ENCODE measurements at regions of chr6 and their contacts with region 1.

Region 1: GRCh38 chr6:43386492-43386891 is 17.0 kb upstream of the ZNF318 start:
- DNase-seq: no peak
- ATAC-seq: no peak
- H3K4me3 Mint-ChIP-seq: peak overlapping the region; percentile 15
- H3K27ac Mint-ChIP-seq: peak overlapping the region; percentile 98
- H3K4me1 Mint-ChIP-seq: peaks cover 65% of the 10 kb centered on the region
- H3K27me3 Mint-ChIP-seq: peaks cover 18% of the 10 kb centered on the region
- CTCF ChIP-seq: no peak

Region 2: GRCh38 chr6:43174263-43175112 is 212.0 kb before region 1 on chr6:
- CTCF ChIA-PET with region 1: no interaction called
- POLR2A ChIA-PET with region 1: interaction called, 4 read pairs
- intact Hi-C with region 1: loop called (anchors 5 kb)
- DNase-seq: peak; percentile 77
- ATAC-seq: peak; percentile 71
- H3K4me3 Mint-ChIP-seq: peak overlapping the region; percentile 73
- H3K27ac Mint-ChIP-seq: peak overlapping the region; percentile 90
- H3K4me1 Mint-ChIP-seq: peaks cover 48% of the 10 kb centered on the region
- H3K27me3 Mint-ChIP-seq: no peaks in the 10 kb centered on the region
- CTCF ChIP-seq: no peak

Region 3: DNA sequence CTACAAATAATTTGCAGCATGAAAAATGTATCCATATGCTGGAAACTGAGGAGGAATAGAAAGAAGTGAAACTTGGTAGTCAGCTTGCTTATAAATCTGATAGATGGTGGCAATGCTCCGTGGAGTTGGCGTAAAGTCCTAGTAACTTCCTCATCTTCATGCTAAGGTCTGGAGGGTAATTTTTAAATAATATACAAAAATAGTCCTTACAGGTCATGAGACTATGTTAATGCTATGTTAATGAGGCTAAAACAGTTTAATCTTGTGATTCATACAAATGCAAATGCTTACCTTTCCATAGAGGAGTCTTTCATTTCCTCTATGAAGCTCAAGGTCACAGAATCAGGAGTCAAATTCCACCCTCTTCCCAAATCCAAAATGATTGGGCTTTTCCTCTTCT is 68.5 kb before region 1 on chr6:
- CTCF ChIA-PET with region 1: interaction called, 5 read pairs
- POLR2A ChIA-PET with region 1: interaction called, 11 read pairs
- intact Hi-C with region 1: loop called (anchors 2 kb)
- DNase-seq: no peak
- ATAC-seq: peak; percentile 61
- H3K4me3 Mint-ChIP-seq: peak overlapping the region; percentile 68
- H3K27ac Mint-ChIP-seq: peak overlapping the region; percentile 91
- H3K4me1 Mint-ChIP-seq: peaks cover 86% of the 10 kb centered on the region
- H3K27me3 Mint-ChIP-seq: no peaks in the 10 kb centered on the region
- CTCF ChIP-seq: no peak

Region 4: GRCh38 chr6:43361269-43361668 is 25.2 kb before region 1 on chr6:
- CTCF ChIA-PET with region 1: interaction called, 75 read pairs
- POLR2A ChIA-PET with region 1: interaction called, 384 read pairs
- intact Hi-C with region 1: no loop called
- DNase-seq: no peak
- ATAC-seq: peak; percentile 37
- H3K4me3 Mint-ChIP-seq: no peak overlapping the region
- H3K27ac Mint-ChIP-seq: peak overlapping the region; percentile 7
- H3K4me1 Mint-ChIP-seq: peaks cover 55% of the 10 kb centered on the region
- H3K27me3 Mint-ChIP-seq: no peaks in the 10 kb centered on the region
- CTCF ChIP-seq: no peak

Region 5: GRCh38 chr6:43402820-43403219 is 16.3 kb after region 1 on chr6:
- CTCF ChIA-PET with region 1: interaction called, 6 read pairs
- POLR2A ChIA-PET with region 1: interaction called, 23 read pairs
- intact Hi-C with region 1: loop called (anchors 1 kb)
- DNase-seq: no peak
- ATAC-seq: no peak
- H3K4me3 Mint-ChIP-seq: no peak overlapping the region
- H3K27ac Mint-ChIP-seq: no peak overlapping the region
- H3K4me1 Mint-ChIP-seq: peaks cover 4% of the 10 kb centered on the region
- H3K27me3 Mint-ChIP-seq: peaks cover 23% of the 10 kb centered on the region
- CTCF ChIP-seq: no peak

Region 6: DNA sequence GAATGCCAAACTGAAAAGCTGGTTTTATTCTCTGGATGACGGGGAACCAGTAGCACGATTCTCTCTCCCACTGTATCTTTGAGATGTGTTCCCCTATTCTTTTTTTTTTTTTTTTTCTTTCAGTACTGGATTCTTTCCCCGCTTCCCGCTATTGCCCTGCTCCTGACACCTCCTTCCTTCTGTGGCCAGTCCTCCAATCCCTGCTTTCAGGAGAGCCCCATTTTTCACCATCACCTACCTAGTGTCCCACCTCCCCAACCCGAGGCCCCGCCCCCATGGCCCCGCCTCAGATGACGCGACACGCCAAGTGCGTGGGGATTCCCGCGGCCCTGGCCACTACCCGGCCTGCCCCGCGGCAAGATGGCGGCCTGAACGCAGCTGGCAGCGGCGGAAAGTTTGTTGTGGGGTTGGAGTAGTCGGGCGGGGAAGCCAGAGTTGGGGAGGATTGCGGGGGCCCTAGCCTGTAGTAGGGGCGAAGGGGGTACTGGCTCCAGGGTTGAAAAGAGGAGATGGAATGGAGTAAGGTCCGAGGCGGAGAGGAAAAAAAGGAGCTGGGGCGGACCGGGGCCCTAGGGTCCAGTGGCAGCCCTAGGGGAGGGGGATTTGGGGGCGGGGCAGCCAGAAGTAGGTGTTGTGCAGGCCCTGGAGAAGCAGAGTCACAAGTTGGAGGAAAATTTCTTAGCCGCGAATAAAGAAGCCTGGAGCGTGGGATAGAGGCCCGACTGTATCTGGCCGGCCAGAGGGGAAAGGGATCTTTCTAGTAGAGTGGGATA is 90.9 kb after region 1 on chr6 and contains the start of gene TJAP1:
- CTCF ChIA-PET with region 1: no interaction called
- POLR2A ChIA-PET with region 1: interaction called, 15 read pairs
- intact Hi-C with region 1: no loop called
- DNase-seq: peak; percentile 98
- ATAC-seq: peak; percentile 100
- H3K4me3 Mint-ChIP-seq: peak within 1 kb of the TSS; percentile 96
- H3K27ac Mint-ChIP-seq: peak within 1 kb of the TSS; percentile 94
- H3K4me1 Mint-ChIP-seq: peaks cover 41% of the 10 kb centered on the region
- H3K27me3 Mint-ChIP-seq: no peaks in the 10 kb centered on the region
- CTCF ChIP-seq: no peak
- total RNA-seq, gene TJAP1: 36.0 and 45.3 TPM in 2 replicates

Region 7: DNA sequence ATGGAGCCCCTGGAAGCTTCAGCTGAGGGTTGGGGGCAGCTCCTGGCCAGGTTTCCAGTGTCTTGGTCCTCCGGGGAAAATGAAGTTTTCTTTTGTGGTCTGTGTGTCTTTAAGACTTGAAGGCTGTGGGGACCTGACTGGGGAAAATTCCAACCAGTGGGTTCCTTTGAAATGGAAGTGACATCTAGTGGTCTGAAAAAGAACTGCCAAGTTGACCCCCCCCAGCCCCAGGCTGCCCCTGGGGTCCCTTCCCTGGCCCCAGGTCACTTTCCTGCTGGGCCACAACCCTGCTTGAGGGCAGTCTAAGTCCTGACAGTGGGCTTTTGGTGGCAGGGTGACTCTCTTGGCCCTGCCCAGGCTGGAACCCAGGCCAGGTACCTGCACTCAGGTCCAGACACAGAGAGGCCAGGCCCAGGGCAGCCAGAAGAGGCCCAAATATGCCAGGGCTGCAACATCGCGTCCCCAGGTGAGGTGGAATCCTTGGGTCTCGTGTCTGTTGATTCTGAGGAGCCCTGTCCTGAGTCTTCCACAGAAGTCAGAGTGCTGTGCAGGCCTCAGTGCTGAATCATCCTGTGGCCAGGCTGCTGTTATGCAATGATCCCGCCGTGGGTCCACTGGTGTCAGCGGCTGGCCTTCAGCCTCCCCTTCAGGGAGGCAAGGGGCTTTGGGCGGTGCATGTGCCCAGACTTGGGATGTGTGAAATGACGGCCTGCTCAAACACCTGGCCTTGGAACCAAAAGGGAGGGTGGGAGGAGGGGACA is 452.0 kb after region 1 on chr6:
- CTCF ChIA-PET with region 1: no interaction called
- POLR2A ChIA-PET with region 1: no interaction called
- intact Hi-C with region 1: no loop called
- DNase-seq: no peak
- ATAC-seq: no peak
- H3K4me3 Mint-ChIP-seq: no peak overlapping the region
- H3K27ac Mint-ChIP-seq: no peak overlapping the region
- H3K4me1 Mint-ChIP-seq: no peaks in the 10 kb centered on the region
- H3K27me3 Mint-ChIP-seq: peaks cover 10% of the 10 kb centered on the region
- CTCF ChIP-seq: no peak

Region 8: GRCh38 chr6:45057711-45058110 is 1671.2 kb after region 1 on chr6:
- CTCF ChIA-PET with region 1: no interaction called
- POLR2A ChIA-PET with region 1: no interaction called
- intact Hi-C with region 1: no loop called
- DNase-seq: no peak
- ATAC-seq: no peak
- H3K4me3 Mint-ChIP-seq: no peak overlapping the region
- H3K27ac Mint-ChIP-seq: no peak overlapping the region
- H3K4me1 Mint-ChIP-seq: no peaks in the 10 kb centered on the region
- H3K27me3 Mint-ChIP-seq: no peaks in the 10 kb centered on the region
- CTCF ChIP-seq: no peak